MCF 10A (cell line): ENCODE measurements at regions of chr11 and their contacts with region 1.

Region 1: GRCh38 chr11:118263695-118264567 is at the start of gene MPZL2:
- DNase-seq: peak; percentile 93
- H3K4me3 Mint-ChIP-seq: peak within 1 kb of the TSS; percentile 93
- H3K27ac Mint-ChIP-seq: peak within 1 kb of the TSS; percentile 95
- H3K4me1 Mint-ChIP-seq: peaks cover 44% of the 10 kb centered on the region
- H3K27me3 Mint-ChIP-seq: no peaks in the 10 kb centered on the region
- CTCF ChIP-seq: no peak
- total RNA-seq, gene MPZL2: 7.0 and 13.7 TPM in 2 replicates

Region 2: GRCh38 chr11:118184784-118185579 is 78.9 kb before region 1 on chr11:
- CTCF ChIA-PET with region 1: no interaction called
- POLR2A ChIA-PET with region 1: no interaction called
- intact Hi-C with region 1: no loop called
- DNase-seq: no peak
- H3K4me3 Mint-ChIP-seq: no peak overlapping the region
- H3K27ac Mint-ChIP-seq: no peak overlapping the region
- H3K4me1 Mint-ChIP-seq: no peaks in the 10 kb centered on the region
- H3K27me3 Mint-ChIP-seq: peaks cover 34% of the 10 kb centered on the region
- CTCF ChIP-seq: no peak

Region 3: DNA sequence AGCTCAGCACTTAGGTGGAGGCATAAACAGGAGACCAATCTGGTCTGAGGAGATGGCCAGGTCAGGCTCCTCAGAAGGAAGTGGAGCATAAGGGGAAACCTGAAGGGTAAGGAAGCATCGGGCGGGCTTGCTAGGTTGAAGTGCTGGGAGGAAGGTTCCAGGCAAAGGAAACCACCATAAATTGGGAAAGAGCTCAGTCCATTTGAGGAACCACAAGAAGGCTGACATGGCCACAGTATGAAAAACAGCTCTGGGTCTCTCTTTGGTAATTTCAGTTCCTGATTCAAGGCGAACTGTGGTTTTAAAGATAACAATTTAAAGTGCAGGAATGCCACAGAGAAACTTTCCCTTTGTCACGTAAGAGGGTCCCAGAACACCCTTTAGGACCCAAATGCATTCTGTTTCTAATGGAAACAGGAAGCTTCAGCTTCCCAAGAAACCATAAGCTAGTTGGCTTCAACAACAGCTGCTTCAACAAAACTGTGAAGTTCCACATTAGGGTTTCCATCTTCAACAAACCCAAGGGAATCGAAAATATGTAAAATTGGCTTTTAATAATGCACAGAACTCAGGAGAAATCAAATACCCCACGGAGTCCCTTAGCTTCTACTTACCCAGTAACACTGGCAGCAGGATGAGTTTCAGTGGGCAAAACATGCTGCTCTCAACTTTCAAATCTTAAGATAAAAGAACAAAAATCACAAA is 49.6 kb before region 1 on chr11:
- CTCF ChIA-PET with region 1: interaction called, 3 read pairs
- POLR2A ChIA-PET with region 1: interaction called, 12 read pairs
- intact Hi-C with region 1: no loop called
- DNase-seq: no peak
- H3K4me3 Mint-ChIP-seq: no peak overlapping the region
- H3K27ac Mint-ChIP-seq: no peak overlapping the region
- H3K4me1 Mint-ChIP-seq: no peaks in the 10 kb centered on the region
- H3K27me3 Mint-ChIP-seq: peaks cover 51% of the 10 kb centered on the region
- CTCF ChIP-seq: no peak

Region 4: GRCh38 chr11:118247047-118247446 is 16.9 kb before region 1 on chr11:
- CTCF ChIA-PET with region 1: interaction called, 9 read pairs
- POLR2A ChIA-PET with region 1: interaction called, 225 read pairs
- intact Hi-C with region 1: no loop called
- DNase-seq: no peak
- H3K4me3 Mint-ChIP-seq: no peak overlapping the region
- H3K27ac Mint-ChIP-seq: no peak overlapping the region
- H3K4me1 Mint-ChIP-seq: peaks cover 21% of the 10 kb centered on the region
- H3K27me3 Mint-ChIP-seq: no peaks in the 10 kb centered on the region
- CTCF ChIP-seq: no peak

Region 5: GRCh38 chr11:118277306-118277705 is 13.4 kb after region 1 on chr11:
- CTCF ChIA-PET with region 1: interaction called, 10 read pairs
- POLR2A ChIA-PET with region 1: interaction called, 100 read pairs
- intact Hi-C with region 1: no loop called
- DNase-seq: peak; percentile 67
- H3K4me3 Mint-ChIP-seq: no peak overlapping the region
- H3K27ac Mint-ChIP-seq: no peak overlapping the region
- H3K4me1 Mint-ChIP-seq: peaks cover 26% of the 10 kb centered on the region
- H3K27me3 Mint-ChIP-seq: no peaks in the 10 kb centered on the region
- CTCF ChIP-seq: no peak

Region 6: DNA sequence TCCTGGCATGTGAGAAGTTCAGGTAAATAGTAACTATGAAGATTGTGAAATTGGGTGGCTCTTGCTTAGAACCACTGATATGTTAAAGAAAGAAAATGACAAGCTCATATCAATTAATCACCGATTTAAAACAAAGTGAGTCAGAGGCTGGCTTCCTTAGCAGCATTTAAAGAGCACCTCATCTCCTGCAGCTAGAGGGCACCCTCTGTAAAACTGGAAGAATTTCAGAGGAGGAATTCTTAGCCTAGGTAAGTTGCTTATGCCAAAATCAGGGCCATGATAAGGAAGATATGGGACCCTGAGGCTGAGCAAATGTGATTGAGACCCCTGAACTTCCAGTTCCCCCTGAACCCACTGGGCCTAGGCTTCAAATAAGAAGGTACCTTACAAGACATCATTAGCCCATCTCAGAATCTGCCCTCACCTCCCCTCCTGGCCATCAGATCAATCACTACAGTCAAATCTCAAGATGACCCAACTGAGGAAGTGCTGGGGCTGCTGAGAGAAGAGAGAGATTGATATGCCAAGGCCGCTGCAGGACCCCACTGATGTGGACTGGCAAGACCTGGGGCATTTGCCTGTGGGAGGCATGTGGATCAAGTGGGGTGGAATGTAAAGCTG is 32.0 kb after region 1 on chr11:
- CTCF ChIA-PET with region 1: interaction called, 24 read pairs
- POLR2A ChIA-PET with region 1: interaction called, 68 read pairs
- intact Hi-C with region 1: no loop called
- DNase-seq: peak; percentile 68
- H3K4me3 Mint-ChIP-seq: no peak overlapping the region
- H3K27ac Mint-ChIP-seq: no peak overlapping the region
- H3K4me1 Mint-ChIP-seq: peaks cover 12% of the 10 kb centered on the region
- H3K27me3 Mint-ChIP-seq: no peaks in the 10 kb centered on the region
- CTCF ChIP-seq: peak; percentile 36